CD8-positive, alpha-beta T cell (primary cell): ENCODE measurements at regions of chr17 and their contacts with region 1.

Region 1: GRCh38 chr17:39517224-39517623 is 55.9 kb downstream of the CDK12 start:
- DNase-seq: no peak
- ATAC-seq: no peak
- H3K4me3 ChIP-seq: no peak overlapping the region
- H3K4me3 Mint-ChIP-seq: no peak overlapping the region
- H3K27ac ChIP-seq: no peak overlapping the region
- H3K27ac Mint-ChIP-seq: no peak overlapping the region
- H3K4me1 ChIP-seq: no peaks in the 10 kb centered on the region
- H3K4me1 Mint-ChIP-seq: no peaks in the 10 kb centered on the region
- H3K27me3 ChIP-seq: no peaks in the 10 kb centered on the region
- H3K27me3 Mint-ChIP-seq: no peaks in the 10 kb centered on the region
- CTCF ChIP-seq: no peak

Region 2: GRCh38 chr17:39410279-39410678 is 106.9 kb before region 1 on chr17:
- CTCF ChIA-PET with region 1: no interaction called
- POLR2A ChIA-PET with region 1: no interaction called
- intact Hi-C with region 1: loop called in 1 of 2 experiments (anchors 10 kb)
- DNase-seq: no peak
- ATAC-seq: no peak
- H3K4me3 ChIP-seq: no peak overlapping the region
- H3K4me3 Mint-ChIP-seq: no peak overlapping the region
- H3K27ac ChIP-seq: no peak overlapping the region
- H3K27ac Mint-ChIP-seq: no peak overlapping the region
- H3K4me1 ChIP-seq: no peaks in the 10 kb centered on the region
- H3K4me1 Mint-ChIP-seq: no peaks in the 10 kb centered on the region
- H3K27me3 ChIP-seq: no peaks in the 10 kb centered on the region
- H3K27me3 Mint-ChIP-seq: no peaks in the 10 kb centered on the region
- CTCF ChIP-seq: no peak

Region 3: DNA sequence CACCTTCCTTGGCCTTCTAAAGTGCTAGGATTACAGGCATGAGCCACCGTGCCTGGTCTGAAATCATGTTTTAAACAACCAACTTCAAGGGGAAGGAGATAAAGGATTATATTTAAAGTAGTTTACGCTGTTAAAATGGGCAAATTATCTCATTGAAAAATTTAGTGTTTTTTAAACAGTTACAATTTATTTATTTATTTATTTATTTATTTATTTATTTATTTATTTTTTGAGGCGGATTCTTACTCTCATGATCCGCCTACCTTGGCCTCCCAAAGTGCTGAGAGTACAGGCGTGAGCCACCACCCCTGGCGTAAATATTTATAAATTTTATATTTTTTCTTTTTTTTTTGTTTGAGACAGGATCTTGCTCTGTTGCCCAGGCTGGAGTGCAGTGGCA is 33.7 kb before region 1 on chr17:
- CTCF ChIA-PET with region 1: no interaction called
- POLR2A ChIA-PET with region 1: no interaction called
- intact Hi-C with region 1: no loop called
- DNase-seq: no peak
- ATAC-seq: no peak
- H3K4me3 ChIP-seq: no peak overlapping the region
- H3K4me3 Mint-ChIP-seq: no peak overlapping the region
- H3K27ac ChIP-seq: no peak overlapping the region
- H3K27ac Mint-ChIP-seq: no peak overlapping the region
- H3K4me1 ChIP-seq: no peaks in the 10 kb centered on the region
- H3K4me1 Mint-ChIP-seq: peaks cover 11% of the 10 kb centered on the region
- H3K27me3 ChIP-seq: no peaks in the 10 kb centered on the region
- H3K27me3 Mint-ChIP-seq: no peaks in the 10 kb centered on the region
- CTCF ChIP-seq: no peak

Region 4: GRCh38 chr17:39915559-39915958 is 398.3 kb after region 1 on chr17:
- CTCF ChIA-PET with region 1: no interaction called
- POLR2A ChIA-PET with region 1: no interaction called
- intact Hi-C with region 1: no loop called
- DNase-seq: no peak
- ATAC-seq: no peak
- H3K4me3 ChIP-seq: no peak overlapping the region
- H3K4me3 Mint-ChIP-seq: no peak overlapping the region
- H3K27ac ChIP-seq: no peak overlapping the region
- H3K27ac Mint-ChIP-seq: no peak overlapping the region
- H3K4me1 ChIP-seq: peaks cover 24% of the 10 kb centered on the region
- H3K4me1 Mint-ChIP-seq: peaks cover 32% of the 10 kb centered on the region
- H3K27me3 ChIP-seq: no peaks in the 10 kb centered on the region
- H3K27me3 Mint-ChIP-seq: no peaks in the 10 kb centered on the region
- CTCF ChIP-seq: no peak